Thyroid gland (tissue), 4 donors: ENCODE measurements at regions of chr15 and their contacts with region 1.

Region 1: GRCh38 chr15:73697033-73697467 is 12.9 kb downstream of the CD276 start:
- DNase-seq: peak; percentile 82 to 84
- H3K4me3 ChIP-seq: no peak overlapping the region
- H3K27ac ChIP-seq: peak overlapping the region in 1 of 3 donors; percentile 20
- H3K4me1 ChIP-seq: peaks cover 0 to 33% of the 10 kb centered on the region in 2 donors
- H3K27me3 ChIP-seq: no peaks in the 10 kb centered on the region
- CTCF ChIP-seq: no peak
- POLR2A ChIP-seq: no peak

Region 2: GRCh38 chr15:73550190-73550589 is 146.9 kb before region 1 on chr15:
- intact Hi-C with region 1: loop called (anchors 10 kb)
- DNase-seq: no peak
- H3K4me3 ChIP-seq: no peak overlapping the region
- H3K27ac ChIP-seq: no peak overlapping the region
- H3K4me1 ChIP-seq: no peaks in the 10 kb centered on the region
- H3K27me3 ChIP-seq: no peaks in the 10 kb centered on the region
- CTCF ChIP-seq: no peak
- POLR2A ChIP-seq: no peak

Region 3: GRCh38 chr15:73637527-73637926 is 59.5 kb before region 1 on chr15:
- intact Hi-C with region 1: no loop called
- DNase-seq: peak in 1 of 2 donors; percentile 25
- H3K4me3 ChIP-seq: no peak overlapping the region
- H3K27ac ChIP-seq: no peak overlapping the region
- H3K4me1 ChIP-seq: peaks cover 4 to 7% of the 10 kb centered on the region in 2 donors
- H3K27me3 ChIP-seq: no peaks in the 10 kb centered on the region
- CTCF ChIP-seq: no peak
- POLR2A ChIP-seq: no peak

Region 4: GRCh38 chr15:73660455-73660854 is 36.6 kb before region 1 on chr15:
- intact Hi-C with region 1: loop called (anchors 5 kb)
- DNase-seq: no peak
- H3K4me3 ChIP-seq: no peak overlapping the region
- H3K27ac ChIP-seq: no peak overlapping the region
- H3K4me1 ChIP-seq: no peaks in the 10 kb centered on the region
- H3K27me3 ChIP-seq: no peaks in the 10 kb centered on the region
- CTCF ChIP-seq: no peak
- POLR2A ChIP-seq: no peak

Region 5: DNA sequence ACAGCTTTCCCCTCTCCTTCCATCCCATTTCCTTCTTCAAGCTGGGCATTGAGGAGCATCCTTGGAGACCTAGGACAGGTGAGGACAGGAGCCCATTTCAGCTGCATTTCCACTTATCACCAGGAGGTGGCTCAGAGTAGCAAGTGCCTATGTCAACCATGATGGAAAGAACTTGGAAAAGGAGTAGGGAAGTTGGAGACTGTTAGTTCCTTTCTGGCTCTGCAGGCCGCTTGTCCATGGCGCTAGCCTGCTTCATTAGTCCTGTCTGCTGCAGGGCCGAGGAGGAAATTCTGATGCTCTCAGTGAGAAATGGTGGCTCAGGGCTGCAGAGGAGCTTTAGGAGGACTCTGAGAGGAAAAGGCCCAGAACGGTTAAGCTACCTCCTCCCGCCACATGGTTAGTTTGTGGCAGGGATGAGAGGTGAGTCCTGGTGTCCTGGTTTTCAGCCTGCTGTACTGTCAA is 19.9 kb before region 1 on chr15:
- intact Hi-C with region 1: loop called (anchors 2 kb)
- DNase-seq: peak; percentile 70 to 74
- H3K4me3 ChIP-seq: no peak overlapping the region
- H3K27ac ChIP-seq: no peak overlapping the region
- H3K4me1 ChIP-seq: peaks cover 0 to 3% of the 10 kb centered on the region in 2 donors
- H3K27me3 ChIP-seq: no peaks in the 10 kb centered on the region
- CTCF ChIP-seq: peak; percentile 78 to 93 (median 89)
- POLR2A ChIP-seq: no peak

Region 6: GRCh38 chr15:73908030-73908821 is 211.2 kb after region 1 on chr15:
- intact Hi-C with region 1: loop called (anchors 10 kb)
- DNase-seq: peak; percentile 82 to 83
- H3K4me3 ChIP-seq: no peak overlapping the region
- H3K27ac ChIP-seq: no peak overlapping the region
- H3K4me1 ChIP-seq: no peaks in the 10 kb centered on the region
- H3K27me3 ChIP-seq: no peaks in the 10 kb centered on the region
- CTCF ChIP-seq: peak; percentile 57 to 93 (median 79)
- POLR2A ChIP-seq: no peak